CD8-positive, alpha-beta T cell (primary cell): ENCODE measurements at regions of chr7 and their contacts with region 1.

Region 1: DNA sequence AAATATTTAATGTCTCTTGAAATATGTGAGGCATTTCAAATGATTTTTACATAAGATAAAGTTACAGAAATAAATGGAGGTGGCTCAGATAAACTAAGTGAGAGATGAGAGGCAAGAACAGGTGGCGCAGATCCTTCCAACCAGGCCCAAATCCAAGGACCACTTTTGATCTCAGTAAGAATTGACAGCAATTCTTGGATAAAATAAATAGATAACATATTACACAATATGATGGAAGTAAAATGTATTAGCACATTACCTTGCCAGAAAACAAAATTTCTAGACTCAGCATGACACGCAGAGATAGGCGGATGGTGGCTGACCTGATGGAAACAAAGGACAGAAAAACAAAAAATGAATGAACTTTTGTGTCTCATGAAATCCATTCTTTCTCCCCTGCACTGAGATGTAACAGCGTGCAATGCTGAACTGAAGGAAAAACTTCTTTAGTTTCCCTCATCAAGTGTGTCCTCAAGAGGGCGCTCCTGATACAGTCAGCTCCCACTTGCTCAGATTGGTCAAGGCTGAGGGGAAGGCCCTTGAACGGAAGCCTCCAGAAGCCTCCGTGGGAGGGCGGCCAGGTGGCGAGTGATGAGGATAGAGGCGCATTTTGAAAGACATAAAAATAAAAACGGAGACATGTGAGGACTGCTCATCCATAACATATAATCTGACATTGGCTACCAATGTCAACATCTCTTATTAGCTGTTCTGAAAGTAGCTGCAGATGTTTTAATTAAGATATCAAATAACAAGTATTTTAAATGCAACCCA is 62.8 kb upstream of the GSDME start:
- DNase-seq: peak; percentile 30 to 90 (median 74)
- ATAC-seq: peak; percentile 5
- H3K4me3 ChIP-seq: peak overlapping the region in 1 of 2 experiments; percentile 19
- H3K4me3 Mint-ChIP-seq: peak overlapping the region; percentile 74
- H3K27ac ChIP-seq: peak overlapping the region; percentile 52 to 90
- H3K27ac Mint-ChIP-seq: peak overlapping the region; percentile 93
- H3K4me1 ChIP-seq: peaks cover 28% of the 10 kb centered on the region
- H3K4me1 Mint-ChIP-seq: peaks cover 30% of the 10 kb centered on the region
- H3K27me3 ChIP-seq: no peaks in the 10 kb centered on the region
- H3K27me3 Mint-ChIP-seq: no peaks in the 10 kb centered on the region
- CTCF ChIP-seq: peak; percentile 84

Region 2: GRCh38 chr7:24831240-24831639 is 11.1 kb after region 1 on chr7:
- CTCF ChIA-PET with region 1: interaction called, 16 read pairs
- POLR2A ChIA-PET with region 1: no interaction called
- intact Hi-C with region 1: no loop called
- DNase-seq: no peak
- ATAC-seq: no peak
- H3K4me3 ChIP-seq: no peak overlapping the region
- H3K4me3 Mint-ChIP-seq: no peak overlapping the region
- H3K27ac ChIP-seq: no peak overlapping the region
- H3K27ac Mint-ChIP-seq: no peak overlapping the region
- H3K4me1 ChIP-seq: peaks cover 23% of the 10 kb centered on the region
- H3K4me1 Mint-ChIP-seq: peaks cover 27% of the 10 kb centered on the region
- H3K27me3 ChIP-seq: no peaks in the 10 kb centered on the region
- H3K27me3 Mint-ChIP-seq: no peaks in the 10 kb centered on the region
- CTCF ChIP-seq: no peak

Region 3: DNA sequence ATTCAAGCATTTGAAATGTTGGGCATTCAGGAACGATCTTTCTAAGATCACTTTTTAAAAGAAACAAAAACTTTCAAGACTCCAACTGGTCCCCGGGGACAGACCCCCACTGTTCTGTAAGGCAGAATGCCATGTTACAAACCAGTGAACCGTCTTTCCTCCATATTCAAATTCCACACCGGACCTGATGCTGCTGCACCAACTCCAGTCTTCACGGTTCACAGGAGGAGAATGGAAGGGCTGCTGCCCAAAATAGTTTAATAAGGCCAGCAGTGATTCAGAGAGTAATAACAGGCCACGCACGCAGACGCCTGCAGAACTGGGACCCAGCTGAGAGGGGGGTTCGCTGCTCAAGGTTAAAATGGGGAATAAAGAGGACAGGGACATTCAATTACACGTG is 112.7 kb after region 1 on chr7:
- CTCF ChIA-PET with region 1: no interaction called
- POLR2A ChIA-PET with region 1: no interaction called
- intact Hi-C with region 1: no loop called
- DNase-seq: no peak
- ATAC-seq: no peak
- H3K4me3 ChIP-seq: no peak overlapping the region
- H3K4me3 Mint-ChIP-seq: no peak overlapping the region
- H3K27ac ChIP-seq: no peak overlapping the region
- H3K27ac Mint-ChIP-seq: no peak overlapping the region
- H3K4me1 ChIP-seq: no peaks in the 10 kb centered on the region
- H3K4me1 Mint-ChIP-seq: peaks cover 26% of the 10 kb centered on the region
- H3K27me3 ChIP-seq: no peaks in the 10 kb centered on the region
- H3K27me3 Mint-ChIP-seq: no peaks in the 10 kb centered on the region
- CTCF ChIP-seq: no peak

Region 4: DNA sequence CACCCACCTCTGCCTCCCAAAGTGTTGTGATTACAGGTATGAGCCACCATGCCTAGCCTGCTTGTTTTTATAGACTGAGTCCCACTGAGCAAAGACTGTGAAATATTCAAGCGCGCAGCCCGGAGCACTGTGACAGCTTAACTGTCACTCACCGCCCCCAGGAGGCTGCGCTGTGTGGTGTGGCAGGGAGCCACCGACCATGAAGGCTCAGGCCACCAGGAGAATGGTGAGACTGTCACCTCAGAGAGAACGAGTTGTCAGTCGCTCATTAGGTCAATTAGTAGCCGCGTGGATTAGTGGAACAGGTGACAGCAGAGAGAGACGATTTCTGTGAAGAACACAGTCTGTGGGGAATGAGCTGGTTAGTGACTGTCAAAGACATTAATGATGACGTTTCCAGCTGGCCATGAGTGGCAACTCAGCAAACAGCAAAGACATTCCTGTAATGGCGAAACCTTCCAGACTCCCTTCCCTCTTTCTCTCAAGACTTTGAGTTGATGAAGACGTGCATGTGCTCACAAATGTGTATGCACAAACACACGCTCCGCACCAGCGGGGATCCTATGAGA is 240.5 kb after region 1 on chr7:
- CTCF ChIA-PET with region 1: interaction called, 27 read pairs
- POLR2A ChIA-PET with region 1: interaction called, 4 read pairs
- intact Hi-C with region 1: no loop called
- DNase-seq: no peak
- ATAC-seq: no peak
- H3K4me3 ChIP-seq: no peak overlapping the region
- H3K4me3 Mint-ChIP-seq: no peak overlapping the region
- H3K27ac ChIP-seq: no peak overlapping the region
- H3K27ac Mint-ChIP-seq: no peak overlapping the region
- H3K4me1 ChIP-seq: no peaks in the 10 kb centered on the region
- H3K4me1 Mint-ChIP-seq: no peaks in the 10 kb centered on the region
- H3K27me3 ChIP-seq: no peaks in the 10 kb centered on the region
- H3K27me3 Mint-ChIP-seq: peaks cover 2% of the 10 kb centered on the region
- CTCF ChIP-seq: no peak

Region 5: DNA sequence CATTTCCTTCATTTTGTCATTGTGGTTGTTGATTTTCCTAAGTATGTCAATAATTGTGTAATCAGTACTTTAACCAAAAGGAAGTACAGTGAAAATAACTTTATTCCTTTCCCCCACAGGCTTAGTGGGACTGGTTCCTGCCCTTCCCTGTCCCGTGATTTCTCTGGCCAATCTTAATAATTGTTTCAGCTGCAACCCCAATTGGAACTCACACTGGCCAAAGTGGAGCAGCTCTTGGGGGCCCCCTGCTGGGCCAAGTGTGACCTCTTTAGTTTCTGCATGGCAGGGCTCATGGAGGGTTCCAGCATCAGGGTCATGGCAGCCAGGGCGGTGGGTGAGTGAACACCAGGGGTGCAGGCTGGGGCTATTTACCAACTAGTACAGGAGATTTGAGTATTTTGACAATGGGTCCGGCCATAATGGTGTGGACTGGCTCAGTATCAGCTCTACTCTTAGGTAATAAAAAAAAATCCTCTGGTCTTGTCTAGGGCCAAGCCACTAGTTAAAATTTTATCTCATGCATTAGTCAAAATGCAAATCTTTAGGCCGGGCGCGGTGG is 273.2 kb after region 1 on chr7:
- CTCF ChIA-PET with region 1: interaction called, 170 read pairs
- POLR2A ChIA-PET with region 1: interaction called, 6 read pairs
- intact Hi-C with region 1: loop called in 1 of 2 experiments (anchors 1 kb)
- DNase-seq: peak; percentile 51 to 82 (median 75)
- ATAC-seq: peak; percentile 88
- H3K4me3 ChIP-seq: no peak overlapping the region
- H3K4me3 Mint-ChIP-seq: no peak overlapping the region
- H3K27ac ChIP-seq: no peak overlapping the region
- H3K27ac Mint-ChIP-seq: no peak overlapping the region
- H3K4me1 ChIP-seq: peaks cover 3% of the 10 kb centered on the region
- H3K4me1 Mint-ChIP-seq: peaks cover 6% of the 10 kb centered on the region
- H3K27me3 ChIP-seq: no peaks in the 10 kb centered on the region
- H3K27me3 Mint-ChIP-seq: peaks cover 2% of the 10 kb centered on the region
- CTCF ChIP-seq: peak; percentile 77

Region 6: GRCh38 chr7:25125137-25125946 is 305.2 kb after region 1 on chr7 and contains the start of gene CYCS:
- CTCF ChIA-PET with region 1: interaction called, 4 read pairs
- POLR2A ChIA-PET with region 1: no interaction called
- intact Hi-C with region 1: loop called in 1 of 2 experiments (anchors 1 kb)
- DNase-seq: peak; percentile 99 to 100 (median 99)
- ATAC-seq: peak; percentile 92
- H3K4me3 ChIP-seq: peak within 1 kb of the TSS; percentile 84 to 86
- H3K4me3 Mint-ChIP-seq: peak within 1 kb of the TSS; percentile 97
- H3K27ac ChIP-seq: peak within 1 kb of the TSS; percentile 96 to 97
- H3K27ac Mint-ChIP-seq: peak within 1 kb of the TSS; percentile 99
- H3K4me1 ChIP-seq: peaks cover 12% of the 10 kb centered on the region
- H3K4me1 Mint-ChIP-seq: peaks cover 22% of the 10 kb centered on the region
- H3K27me3 ChIP-seq: no peaks in the 10 kb centered on the region
- H3K27me3 Mint-ChIP-seq: no peaks in the 10 kb centered on the region
- CTCF ChIP-seq: no peak
- total RNA-seq, gene CYCS: 135 to 140 TPM